Naive thymus-derived CD4-positive, alpha-beta T cell (primary cell): ENCODE measurements at regions of chr1 and their contacts with region 1.

Region 1: GRCh38 chr1:161805399-161806197 is 39.5 kb downstream of the ATF6 start:
- DNase-seq: no peak
- ATAC-seq: no peak
- H3K4me3 ChIP-seq: no peak overlapping the region
- H3K4me3 Mint-ChIP-seq: no peak overlapping the region
- H3K27ac ChIP-seq: no peak overlapping the region
- H3K27ac Mint-ChIP-seq: peak overlapping the region in 6 of 9 donors; percentile 9 to 71 (median 50)
- H3K4me1 ChIP-seq: no peaks in the 10 kb centered on the region
- H3K4me1 Mint-ChIP-seq: peaks cover 3 to 33% (median 19%) of the 10 kb centered on the region in 7 donors
- H3K27me3 ChIP-seq: no peaks in the 10 kb centered on the region
- H3K27me3 Mint-ChIP-seq: no peaks in the 10 kb centered on the region

Region 2: GRCh38 chr1:161749509-161750407 is 55.8 kb before region 1 on chr1 and contains the start of gene DUSP12:
- CTCF ChIA-PET with region 1: no interaction called
- POLR2A ChIA-PET with region 1: no interaction called
- intact Hi-C with region 1: no loop called
- DNase-seq: peak; percentile 69 to 86 (median 83)
- ATAC-seq: peak; percentile 99
- H3K4me3 ChIP-seq: peak within 1 kb of the TSS; percentile 86
- H3K4me3 Mint-ChIP-seq: peak within 1 kb of the TSS; percentile 96 to 100 (median 99)
- H3K27ac ChIP-seq: peak within 1 kb of the TSS; percentile 74
- H3K27ac Mint-ChIP-seq: peak within 1 kb of the TSS; percentile 83 to 99 (median 96)
- H3K4me1 ChIP-seq: peaks cover 10 to 12% of the 10 kb centered on the region in 2 donors
- H3K4me1 Mint-ChIP-seq: peaks cover 32 to 50% (median 43%) of the 10 kb centered on the region in 7 donors
- H3K27me3 ChIP-seq: no peaks in the 10 kb centered on the region
- H3K27me3 Mint-ChIP-seq: peaks cover 0 to 24% (median 5%) of the 10 kb centered on the region in 5 donors
- total RNA-seq, gene DUSP12: 16.1 to 31.4 (median 24.1) TPM

Region 3: GRCh38 chr1:161843156-161843555 is 37.6 kb after region 1 on chr1:
- CTCF ChIA-PET with region 1: no interaction called
- POLR2A ChIA-PET with region 1: no interaction called
- intact Hi-C with region 1: loop called in 1 of 2 experiments (anchors 5 kb)
- DNase-seq: no peak
- ATAC-seq: no peak
- H3K4me3 ChIP-seq: no peak overlapping the region
- H3K4me3 Mint-ChIP-seq: no peak overlapping the region
- H3K27ac ChIP-seq: no peak overlapping the region
- H3K27ac Mint-ChIP-seq: no peak overlapping the region
- H3K4me1 ChIP-seq: no peaks in the 10 kb centered on the region
- H3K4me1 Mint-ChIP-seq: peaks cover 0 to 10% (median 3%) of the 10 kb centered on the region in 7 donors
- H3K27me3 ChIP-seq: no peaks in the 10 kb centered on the region
- H3K27me3 Mint-ChIP-seq: no peaks in the 10 kb centered on the region